Gastrocnemius medialis (tissue), 4 donors: ENCODE measurements at regions of chr18 and their contacts with region 1.

Region 1: GRCh38 chr18:62450546-62451406 is 72.0 kb upstream of the ZCCHC2 start:
- DNase-seq: peak; percentile 88 to 94
- ATAC-seq: peak; percentile 84 to 87
- H3K4me3 ChIP-seq: peak overlapping the region in 3 of 4 donors; percentile 4 to 34 (median 16)
- H3K27ac ChIP-seq: peak overlapping the region; percentile 81 to 94 (median 91)
- H3K4me1 ChIP-seq: peaks cover 22 to 23% of the 10 kb centered on the region in 2 donors
- H3K27me3 ChIP-seq: no peaks in the 10 kb centered on the region
- CTCF ChIP-seq: no peak
- POLR2A ChIP-seq: no peak

Region 2: DNA sequence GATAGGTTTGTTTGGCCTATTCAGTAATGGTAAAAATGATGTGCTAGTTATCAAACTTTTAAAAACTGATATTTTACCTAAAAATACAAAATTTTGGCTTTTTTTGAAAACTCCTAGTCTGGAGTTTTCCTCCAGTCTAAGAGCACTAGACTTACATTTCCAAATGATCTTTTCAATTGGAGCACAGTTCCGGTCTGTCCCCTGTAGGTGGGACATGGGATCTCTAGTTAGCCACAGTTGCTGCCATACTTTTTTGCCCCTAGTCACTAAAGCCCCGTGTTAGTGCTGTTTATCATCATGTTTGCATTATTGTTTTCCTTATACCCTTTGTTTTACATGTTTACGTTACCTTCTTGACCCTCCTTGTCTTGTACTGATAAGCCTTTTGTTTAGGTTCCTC is 211.3 kb before region 1 on chr18:
- in situ Hi-C with region 1: no loop called
- intact Hi-C with region 1: no loop called
- DNase-seq: no peak
- ATAC-seq: no peak
- H3K4me3 ChIP-seq: no peak overlapping the region
- H3K27ac ChIP-seq: no peak overlapping the region
- H3K4me1 ChIP-seq: no peaks in the 10 kb centered on the region
- H3K27me3 ChIP-seq: no peaks in the 10 kb centered on the region
- CTCF ChIP-seq: no peak
- POLR2A ChIP-seq: no peak

Region 3: GRCh38 chr18:62346333-62347090 is 104.3 kb before region 1 on chr18:
- in situ Hi-C with region 1: no loop called
- intact Hi-C with region 1: no loop called
- DNase-seq: no peak
- ATAC-seq: no peak
- H3K4me3 ChIP-seq: no peak overlapping the region
- H3K27ac ChIP-seq: no peak overlapping the region
- H3K4me1 ChIP-seq: no peaks in the 10 kb centered on the region
- H3K27me3 ChIP-seq: no peaks in the 10 kb centered on the region
- CTCF ChIP-seq: no peak
- POLR2A ChIP-seq: no peak

Region 4: GRCh38 chr18:62437235-62438017 is 13.3 kb before region 1 on chr18:
- in situ Hi-C with region 1: no loop called
- intact Hi-C with region 1: loop called (anchors 1 kb)
- DNase-seq: peak; percentile 89 to 96
- ATAC-seq: peak; percentile 90 to 95
- H3K4me3 ChIP-seq: peak overlapping the region; percentile 1 to 47 (median 28)
- H3K27ac ChIP-seq: peak overlapping the region; percentile 84 to 92 (median 92)
- H3K4me1 ChIP-seq: peaks cover 18 to 33% of the 10 kb centered on the region in 2 donors
- H3K27me3 ChIP-seq: no peaks in the 10 kb centered on the region
- CTCF ChIP-seq: no peak
- POLR2A ChIP-seq: peak; percentile 20 to 28

Region 5: GRCh38 chr18:62545098-62545497 is 94.3 kb after region 1 on chr18:
- in situ Hi-C with region 1: no loop called
- intact Hi-C with region 1: no loop called
- DNase-seq: no peak
- ATAC-seq: no peak
- H3K4me3 ChIP-seq: no peak overlapping the region
- H3K27ac ChIP-seq: no peak overlapping the region
- H3K4me1 ChIP-seq: peaks cover 12 to 15% of the 10 kb centered on the region in 2 donors
- H3K27me3 ChIP-seq: no peaks in the 10 kb centered on the region
- CTCF ChIP-seq: no peak
- POLR2A ChIP-seq: no peak

Region 6: GRCh38 chr18:62596145-62597005 is 145.6 kb after region 1 on chr18:
- in situ Hi-C with region 1: no loop called
- intact Hi-C with region 1: no loop called
- DNase-seq: no peak
- ATAC-seq: no peak
- H3K4me3 ChIP-seq: peak overlapping the region; percentile 29 to 56 (median 46)
- H3K27ac ChIP-seq: no peak overlapping the region
- H3K4me1 ChIP-seq: peaks cover 4 to 17% of the 10 kb centered on the region in 2 donors
- H3K27me3 ChIP-seq: peaks cover 28 to 47% (median 36%) of the 10 kb centered on the region in 3 donors
- CTCF ChIP-seq: no peak
- POLR2A ChIP-seq: no peak